Activated CD4-positive, alpha-beta T cell treated with anti-CD3 and anti-CD28 coated beads, Interleukin-2, amount 10 ng/mL, durations not matched to agents 24 days and 14 days (primary cell): ENCODE measurements at regions of chr2 and their contacts with region 1.

Region 1: GRCh38 chr2:224585205-224586088 is at the start of gene CUL3:
- DNase-seq: peak; percentile 100
- H3K4me3 Mint-ChIP-seq: peak within 1 kb of the TSS; percentile 98
- H3K27ac Mint-ChIP-seq: peak within 1 kb of the TSS; percentile 95
- H3K4me1 Mint-ChIP-seq: peaks cover 28% of the 10 kb centered on the region
- H3K27me3 Mint-ChIP-seq: no peaks in the 10 kb centered on the region
- total RNA-seq, gene CUL3: 92.6 and 97.3 TPM in 2 replicates

Region 2: GRCh38 chr2:223944703-223945531 is 640.5 kb before region 1 on chr2 and contains the start of gene WDFY1:
- intact Hi-C with region 1: loop called (anchors 5 kb)
- DNase-seq: peak; percentile 94
- H3K4me3 Mint-ChIP-seq: peak within 1 kb of the TSS; percentile 91
- H3K27ac Mint-ChIP-seq: peak within 1 kb of the TSS; percentile 94
- H3K4me1 Mint-ChIP-seq: peaks cover 54% of the 10 kb centered on the region
- H3K27me3 Mint-ChIP-seq: no peaks in the 10 kb centered on the region
- total RNA-seq, gene WDFY1: 25.3 and 27.8 TPM in 2 replicates

Region 3: GRCh38 chr2:224039124-224039940 is 546.1 kb before region 1 on chr2 and contains the start of gene SERPINE2:
- intact Hi-C with region 1: loop called (anchors 5 kb)
- DNase-seq: peak; percentile 87
- H3K4me3 Mint-ChIP-seq: peak within 1 kb of the TSS; percentile 97
- H3K27ac Mint-ChIP-seq: peak within 1 kb of the TSS; percentile 49
- H3K4me1 Mint-ChIP-seq: peaks cover 23% of the 10 kb centered on the region
- H3K27me3 Mint-ChIP-seq: peaks cover 49% of the 10 kb centered on the region
- total RNA-seq, gene SERPINE2: 23.2 and 23.9 TPM in 2 replicates

Region 4: GRCh38 chr2:224574423-224575084 is 10.9 kb before region 1 on chr2:
- intact Hi-C with region 1: loop called (anchors 1 kb)
- DNase-seq: no peak
- H3K4me3 Mint-ChIP-seq: peak overlapping the region; percentile 48
- H3K27ac Mint-ChIP-seq: no peak overlapping the region
- H3K4me1 Mint-ChIP-seq: peaks cover 55% of the 10 kb centered on the region
- H3K27me3 Mint-ChIP-seq: no peaks in the 10 kb centered on the region

Region 5: GRCh38 chr2:224650815-224651439 is 65.5 kb after region 1 on chr2:
- intact Hi-C with region 1: loop called (anchors 5 kb)
- DNase-seq: peak; percentile 77
- H3K4me3 Mint-ChIP-seq: no peak overlapping the region
- H3K27ac Mint-ChIP-seq: no peak overlapping the region
- H3K4me1 Mint-ChIP-seq: no peaks in the 10 kb centered on the region
- H3K27me3 Mint-ChIP-seq: peaks cover 3% of the 10 kb centered on the region

Region 6: DNA sequence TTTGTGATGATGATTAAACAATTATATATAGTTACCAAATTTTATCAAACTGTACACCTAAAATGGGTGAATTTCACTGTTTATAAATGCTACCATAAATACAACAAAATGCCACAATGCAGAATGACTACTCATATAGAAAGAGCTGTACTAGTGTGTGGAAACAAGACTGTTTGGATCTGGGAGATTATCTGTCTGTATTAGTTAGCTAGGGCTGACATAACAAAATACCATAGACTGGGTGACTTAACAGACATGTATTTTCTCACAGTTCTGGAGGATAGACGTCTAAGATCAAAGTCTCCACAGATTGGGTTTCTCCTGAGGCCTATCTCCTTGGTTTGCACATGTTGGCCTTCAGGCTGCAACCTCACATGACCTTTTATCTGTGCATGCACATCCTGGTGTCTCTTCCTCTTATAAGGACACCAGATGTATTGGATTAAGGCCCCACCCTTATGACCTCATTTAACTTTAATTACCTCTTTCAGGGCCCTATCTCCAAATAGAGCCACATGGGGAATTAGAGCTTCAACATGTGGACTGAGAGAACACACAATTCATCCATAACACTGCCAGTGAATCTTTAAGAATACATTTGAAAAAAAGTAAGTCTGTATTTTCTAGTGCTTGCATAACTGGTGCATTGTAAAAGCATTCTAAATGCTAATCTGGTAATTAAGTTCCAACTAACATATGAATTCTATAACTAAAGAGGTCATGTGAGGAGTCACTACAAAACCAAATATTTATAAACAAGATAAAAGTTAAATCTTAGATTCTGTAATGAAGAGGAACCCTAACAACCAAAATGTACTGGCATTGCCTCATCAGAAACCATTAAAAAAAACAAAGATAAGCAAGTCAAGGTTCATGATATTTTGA is 1513.7 kb after region 1 on chr2:
- intact Hi-C with region 1: no loop called
- DNase-seq: no peak
- H3K4me3 Mint-ChIP-seq: no peak overlapping the region
- H3K27ac Mint-ChIP-seq: no peak overlapping the region
- H3K4me1 Mint-ChIP-seq: no peaks in the 10 kb centered on the region
- H3K27me3 Mint-ChIP-seq: no peaks in the 10 kb centered on the region